ENCODE measurements at regions of chr7 and their contacts with region 1.

Region 1: DNA sequence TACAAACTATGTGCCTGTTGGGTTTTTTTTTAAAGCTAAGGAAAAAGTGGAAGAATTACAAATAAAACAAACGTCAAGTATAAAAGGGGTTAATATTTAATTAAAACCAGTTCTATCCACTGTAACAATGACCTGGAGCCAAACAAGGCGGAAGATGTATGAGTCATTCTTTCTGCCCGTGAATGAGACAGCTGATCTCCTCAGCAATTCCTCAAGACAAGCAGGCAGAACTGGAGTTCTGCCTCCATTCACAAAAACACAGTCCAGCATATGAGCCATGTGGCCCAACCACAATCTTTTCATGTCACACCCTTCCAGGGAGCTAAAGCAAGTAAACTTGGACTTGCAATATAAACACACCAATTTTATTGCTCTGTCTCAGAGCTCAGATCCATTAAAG is 8.4 kb downstream of the ETV1 start:
- DNase-seq: peak; percentile 94
- H3K4me3 ChIP-seq: peak overlapping the region in 1 of 3 experiments; percentile 38
- H3K27ac ChIP-seq: peak overlapping the region; percentile 60
- H3K4me1 ChIP-seq: peaks cover 21% of the 10 kb centered on the region
- H3K27me3 ChIP-seq: no peaks in the 10 kb centered on the region
- CTCF ChIP-seq: no peak

Region 2: DNA sequence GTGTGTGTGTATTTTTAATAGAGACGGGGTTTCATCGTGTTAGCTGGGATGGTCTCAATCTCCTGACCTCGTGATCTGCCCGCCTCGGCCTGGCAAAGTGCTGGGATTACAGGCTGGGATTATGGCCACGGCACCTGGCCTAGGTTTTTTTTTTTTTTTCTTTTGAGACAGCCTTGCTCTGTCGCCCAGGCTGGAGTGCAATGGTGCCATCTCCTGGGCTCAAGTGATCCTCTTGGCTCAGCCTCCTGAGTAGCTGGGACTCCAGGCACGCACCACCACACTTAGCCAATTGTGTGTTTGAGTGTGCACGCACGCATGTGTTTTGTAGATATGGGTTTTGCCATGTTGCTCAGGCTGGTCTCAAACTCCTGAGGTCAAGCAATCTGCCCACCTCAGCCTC is 621.4 kb before region 1 on chr7:
- CTCF ChIA-PET with region 1: no interaction called
- dilution Hi-C with region 1: no loop called
- in situ Hi-C with region 1: no loop called
- intact Hi-C with region 1: no loop called
- DNase-seq: no peak
- H3K4me3 ChIP-seq: no peak overlapping the region
- H3K27ac ChIP-seq: no peak overlapping the region
- H3K4me1 ChIP-seq: no peaks in the 10 kb centered on the region
- H3K27me3 ChIP-seq: no peaks in the 10 kb centered on the region
- CTCF ChIP-seq: no peak

Region 3: DNA sequence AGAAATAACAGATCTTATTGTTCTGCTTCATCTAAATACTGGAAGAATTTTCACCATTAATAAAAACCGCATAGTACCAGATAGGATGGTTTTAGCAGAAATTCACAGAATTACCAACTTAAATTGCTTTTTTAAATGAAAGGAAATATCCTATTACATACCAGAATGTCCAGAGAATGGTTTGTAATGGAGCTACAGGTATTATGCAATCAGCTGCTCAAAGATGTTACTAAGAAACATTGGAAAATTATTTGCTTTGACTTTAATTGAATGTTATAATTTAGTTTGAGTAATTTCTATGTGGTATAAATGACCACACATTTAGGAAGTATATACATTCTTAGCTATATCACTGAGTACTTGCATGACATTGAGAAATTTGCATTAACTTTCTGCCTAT is 329.9 kb before region 1 on chr7:
- CTCF ChIA-PET with region 1: no interaction called
- dilution Hi-C with region 1: no loop called
- in situ Hi-C with region 1: no loop called
- intact Hi-C with region 1: no loop called
- DNase-seq: no peak
- H3K4me3 ChIP-seq: no peak overlapping the region
- H3K27ac ChIP-seq: no peak overlapping the region
- H3K4me1 ChIP-seq: no peaks in the 10 kb centered on the region
- H3K27me3 ChIP-seq: no peaks in the 10 kb centered on the region
- CTCF ChIP-seq: no peak

Region 4: GRCh38 chr7:13920053-13920697 is 60.9 kb before region 1 on chr7:
- CTCF ChIA-PET with region 1: no interaction called
- dilution Hi-C with region 1: no loop called
- in situ Hi-C with region 1: no loop called
- intact Hi-C with region 1: loop called (anchors 1 kb)
- DNase-seq: peak; percentile 100
- H3K4me3 ChIP-seq: peak overlapping the region in 2 of 3 experiments; percentile 28 to 29
- H3K27ac ChIP-seq: peak overlapping the region; percentile 91
- H3K4me1 ChIP-seq: peaks cover 9% of the 10 kb centered on the region
- H3K27me3 ChIP-seq: no peaks in the 10 kb centered on the region
- CTCF ChIP-seq: no peak